Activated CD8-positive, alpha-beta T cell treated with anti-CD3 and anti-CD28 coated beads for 36 hours (primary cell): ENCODE measurements at regions of chr1 and their contacts with region 1.

Region 1: DNA sequence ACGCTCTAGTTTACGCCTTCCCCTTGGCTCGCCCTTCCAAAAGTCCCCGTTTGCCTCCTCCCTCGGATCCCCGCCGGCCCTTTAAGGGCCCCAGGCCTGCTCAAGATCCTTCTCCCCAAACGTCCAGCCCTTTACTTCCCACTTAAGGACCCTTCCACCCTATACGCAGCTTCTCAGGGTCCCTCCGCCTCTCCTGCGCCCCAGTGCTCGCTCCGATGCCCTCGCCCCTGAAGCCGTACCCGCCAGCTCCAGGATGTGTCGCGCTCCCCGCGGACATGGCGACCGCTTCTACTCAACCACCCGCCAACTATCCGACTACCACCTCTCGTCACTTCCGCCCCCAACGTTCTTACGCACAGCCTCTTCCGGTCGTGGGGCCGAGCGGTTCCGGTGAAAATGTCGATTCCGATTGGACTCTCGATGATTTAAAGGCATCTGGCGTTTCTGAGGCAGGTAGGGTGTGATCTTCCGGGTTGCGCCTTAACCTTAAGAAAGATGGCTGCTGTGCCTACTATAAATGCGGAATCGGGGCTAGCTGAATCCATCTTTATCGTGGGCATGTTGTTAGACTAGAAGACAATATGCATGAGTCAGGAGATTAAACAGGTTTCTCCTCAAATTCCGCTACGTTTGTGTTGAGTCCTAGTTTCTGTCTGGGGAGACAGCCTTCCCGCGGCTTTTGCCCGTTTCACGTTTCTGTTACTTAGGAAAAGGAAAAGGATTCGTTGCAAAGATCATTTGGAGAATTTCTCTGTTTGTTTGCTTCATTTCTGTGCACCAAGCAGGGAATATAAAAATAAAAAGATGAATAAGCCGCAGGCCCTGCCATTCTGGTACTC is at the start of gene KHDC4:
- DNase-seq: peak; percentile 98
- ATAC-seq: peak; percentile 95
- H3K4me3 Mint-ChIP-seq: no peak within 1 kb of the TSS
- H3K27ac Mint-ChIP-seq: no peak within 1 kb of the TSS
- H3K4me1 Mint-ChIP-seq: peaks cover 38% of the 10 kb centered on the region
- H3K27me3 Mint-ChIP-seq: no peaks in the 10 kb centered on the region
- CTCF ChIP-seq: no peak
- total RNA-seq, gene KHDC4: 68.1 to 71.3 TPM

Region 2: GRCh38 chr1:155946633-155947219 is 12.4 kb after region 1 on chr1:
- CTCF ChIA-PET with region 1: interaction called, 8 read pairs
- POLR2A ChIA-PET with region 1: interaction called, 11 read pairs
- intact Hi-C with region 1: no loop called
- DNase-seq: no peak
- ATAC-seq: peak; percentile 37
- H3K4me3 Mint-ChIP-seq: peak overlapping the region; percentile 55
- H3K27ac Mint-ChIP-seq: peak overlapping the region; percentile 88
- H3K4me1 Mint-ChIP-seq: peaks cover 52% of the 10 kb centered on the region
- H3K27me3 Mint-ChIP-seq: no peaks in the 10 kb centered on the region
- CTCF ChIP-seq: no peak

Region 3: GRCh38 chr1:155970531-155971167 is 36.3 kb after region 1 on chr1:
- CTCF ChIA-PET with region 1: interaction called, 121 read pairs
- POLR2A ChIA-PET with region 1: interaction called, 128 read pairs
- intact Hi-C with region 1: no loop called
- DNase-seq: peak; percentile 62
- ATAC-seq: peak; percentile 72
- H3K4me3 Mint-ChIP-seq: peak overlapping the region; percentile 47
- H3K27ac Mint-ChIP-seq: peak overlapping the region; percentile 88
- H3K4me1 Mint-ChIP-seq: peaks cover 92% of the 10 kb centered on the region
- H3K27me3 Mint-ChIP-seq: no peaks in the 10 kb centered on the region
- CTCF ChIP-seq: no peak

Region 4: GRCh38 chr1:155989242-155990004 is 55.1 kb after region 1 on chr1:
- CTCF ChIA-PET with region 1: interaction called, 121 read pairs
- POLR2A ChIA-PET with region 1: interaction called, 9 read pairs
- intact Hi-C with region 1: loop called (anchors 1 kb)
- DNase-seq: peak; percentile 83
- ATAC-seq: peak; percentile 100
- H3K4me3 Mint-ChIP-seq: no peak overlapping the region
- H3K27ac Mint-ChIP-seq: no peak overlapping the region
- H3K4me1 Mint-ChIP-seq: peaks cover 10% of the 10 kb centered on the region
- H3K27me3 Mint-ChIP-seq: no peaks in the 10 kb centered on the region
- CTCF ChIP-seq: peak; percentile 97

Region 5: GRCh38 chr1:156065212-156065611 is 130.9 kb after region 1 on chr1:
- CTCF ChIA-PET with region 1: interaction called, 22 read pairs
- POLR2A ChIA-PET with region 1: no interaction called
- intact Hi-C with region 1: no loop called
- DNase-seq: no peak
- ATAC-seq: peak; percentile 22
- H3K4me3 Mint-ChIP-seq: no peak overlapping the region
- H3K27ac Mint-ChIP-seq: no peak overlapping the region
- H3K4me1 Mint-ChIP-seq: peaks cover 16% of the 10 kb centered on the region
- H3K27me3 Mint-ChIP-seq: no peaks in the 10 kb centered on the region
- CTCF ChIP-seq: no peak